Activated CD8-positive, alpha-beta T cell treated with anti-CD3 and anti-CD28 coated beads for 36 hours (primary cell): ENCODE measurements at regions of chr4 and their contacts with region 1.

Region 1: GRCh38 chr4:146333187-146333894 is 119.0 kb downstream of the REELD1 start:
- DNase-seq: peak; percentile 27
- ATAC-seq: peak; percentile 78
- H3K4me3 Mint-ChIP-seq: no peak overlapping the region
- H3K27ac Mint-ChIP-seq: no peak overlapping the region
- H3K4me1 Mint-ChIP-seq: peaks cover 2% of the 10 kb centered on the region
- H3K27me3 Mint-ChIP-seq: no peaks in the 10 kb centered on the region
- CTCF ChIP-seq: no peak

Region 2: GRCh38 chr4:146654687-146655520 is 321.6 kb after region 1 on chr4:
- CTCF ChIA-PET with region 1: no interaction called
- POLR2A ChIA-PET with region 1: no interaction called
- intact Hi-C with region 1: loop called (anchors 10 kb)
- DNase-seq: no peak
- ATAC-seq: no peak
- H3K4me3 Mint-ChIP-seq: peak overlapping the region; percentile 35
- H3K27ac Mint-ChIP-seq: no peak overlapping the region
- H3K4me1 Mint-ChIP-seq: peaks cover 9% of the 10 kb centered on the region
- H3K27me3 Mint-ChIP-seq: peaks cover 63% of the 10 kb centered on the region
- CTCF ChIP-seq: no peak